ENCODE measurements at regions of chr6 and their contacts with region 1.

Region 1: DNA sequence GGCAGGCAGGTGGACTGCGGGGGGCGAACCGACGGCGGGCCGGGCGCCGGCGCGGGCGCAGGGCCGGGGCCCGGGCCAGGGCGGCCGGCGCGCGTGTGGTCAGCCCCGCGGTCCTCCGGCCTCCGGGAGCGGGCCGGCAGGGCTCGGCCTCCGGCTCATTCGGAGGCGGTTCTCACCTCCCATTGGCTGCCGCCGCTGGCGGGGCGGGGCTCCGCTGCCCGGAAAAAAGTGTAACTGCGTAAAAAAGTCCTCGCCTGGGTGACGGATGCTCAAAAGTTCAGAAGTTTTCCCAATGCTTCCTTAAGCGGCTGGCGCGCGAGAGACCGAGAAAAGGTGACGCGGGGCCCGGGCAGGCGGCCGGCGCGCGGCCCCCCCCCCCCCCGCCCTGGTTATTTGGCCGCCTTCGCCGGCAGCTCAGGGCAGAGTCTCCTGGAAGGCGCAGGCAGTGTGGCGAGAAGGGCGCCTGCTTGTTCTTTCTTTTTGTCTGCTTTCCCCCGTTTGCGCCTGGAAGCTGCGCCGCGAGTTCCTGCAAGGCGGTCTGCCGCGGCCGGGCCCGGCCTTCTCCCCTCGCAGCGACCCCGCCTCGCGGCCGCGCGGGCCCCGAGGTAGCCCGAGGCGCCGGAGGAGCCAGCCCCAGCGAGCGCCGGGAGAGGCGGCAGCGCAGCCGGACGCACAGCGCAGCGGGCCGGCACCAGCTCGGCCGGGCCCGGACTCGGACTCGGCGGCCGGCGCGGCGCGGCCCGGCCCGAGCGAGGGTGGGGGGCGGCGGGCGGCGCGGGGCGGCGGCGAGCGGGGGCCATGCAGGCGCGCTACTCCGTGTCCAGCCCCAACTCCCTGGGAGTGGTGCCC is at the start of gene FOXC1:
- DNase-seq: peak; percentile 81 to 83
- ATAC-seq: peak; percentile 77
- total RNA-seq, gene FOXC1: 0.82 to 1.5 TPM

Region 2: GRCh38 chr6:1063671-1064355 is 546.1 kb before region 1 on chr6:
- intact Hi-C with region 1: no loop called
- DNase-seq: no peak
- ATAC-seq: peak; percentile 68

Region 3: DNA sequence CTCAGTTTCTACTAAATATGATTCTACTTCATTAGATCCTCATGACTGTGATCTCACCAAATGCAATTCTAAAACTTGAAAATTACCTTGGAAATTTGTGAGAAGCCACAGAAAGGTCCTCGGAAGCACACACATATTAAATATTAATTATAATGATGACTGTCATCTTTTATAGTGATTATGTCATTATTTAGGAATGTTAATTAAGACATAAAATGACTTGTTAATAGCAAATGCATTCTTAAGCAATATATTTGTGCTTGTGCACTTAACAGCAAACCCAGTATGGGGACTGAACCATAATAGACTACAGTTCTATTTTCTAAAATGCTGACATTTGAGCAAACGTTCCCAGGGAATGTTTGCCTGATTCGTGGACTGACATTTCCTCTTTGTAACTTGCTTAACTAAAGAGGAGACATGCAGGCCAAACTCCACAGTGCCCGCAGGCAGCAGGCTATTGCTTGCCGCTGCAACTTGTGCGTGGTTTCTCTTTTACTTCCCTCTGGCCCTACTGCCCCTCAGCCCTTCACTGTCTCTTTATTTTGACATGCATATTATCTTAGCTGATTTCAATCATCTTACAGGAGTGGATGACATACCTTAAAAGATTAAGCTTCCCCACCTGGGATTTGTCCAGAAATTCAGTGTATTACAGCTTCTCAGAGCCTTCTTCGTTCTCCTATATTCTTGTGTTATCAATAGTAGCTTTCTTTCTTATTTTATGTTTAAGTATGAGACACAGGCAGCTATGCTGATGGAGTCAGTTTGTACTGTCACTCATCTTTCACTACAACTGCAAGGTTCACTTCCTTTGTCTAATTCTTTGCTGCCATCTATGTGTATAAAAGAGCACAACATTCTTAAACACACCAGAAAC is 494.0 kb after region 1 on chr6:
- intact Hi-C with region 1: loop called in 1 of 2 experiments (anchors 10 kb)
- DNase-seq: no peak
- ATAC-seq: peak; percentile 89

Region 4: DNA sequence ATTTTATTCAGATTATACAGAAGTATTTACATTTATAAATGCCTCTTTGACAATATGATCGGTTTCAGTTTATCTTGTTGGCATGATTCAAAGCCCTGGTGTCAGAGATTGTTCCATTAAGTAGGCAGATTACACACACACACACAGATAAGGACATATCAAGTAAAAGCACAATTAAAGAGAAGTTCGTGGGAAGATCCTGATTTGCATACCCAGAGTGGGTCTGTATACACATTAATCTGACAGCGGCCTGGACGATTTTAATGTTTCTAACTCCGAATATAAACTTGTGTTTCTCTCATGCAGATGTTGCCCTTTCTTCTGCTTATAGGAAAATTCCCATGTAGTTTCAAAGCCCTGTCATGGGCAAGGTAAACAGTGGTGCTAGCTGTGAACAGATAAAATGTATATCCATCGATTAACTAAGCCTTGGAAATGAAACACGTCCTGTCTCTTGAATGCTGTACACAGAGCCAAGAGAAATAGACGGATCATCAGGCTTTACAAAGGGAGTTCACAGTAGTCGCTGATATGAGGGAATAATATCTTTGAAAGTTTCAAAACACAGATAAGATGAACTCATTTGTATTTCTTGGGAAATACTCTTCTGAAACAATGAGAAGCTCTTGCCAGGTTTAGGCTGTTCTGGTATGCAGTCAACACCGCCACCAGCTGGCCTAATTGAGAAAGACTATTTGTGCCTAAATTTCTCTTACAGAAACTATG is 743.7 kb after region 1 on chr6:
- intact Hi-C with region 1: loop called in 1 of 2 experiments (anchors 10 kb)
- DNase-seq: peak; percentile 44 to 74
- ATAC-seq: peak; percentile 83

Region 5: GRCh38 chr6:2634139-2634964 is 1024.5 kb after region 1 on chr6:
- intact Hi-C with region 1: loop called (anchors 5 to 10 kb)
- DNase-seq: peak; percentile 68 to 88
- ATAC-seq: peak; percentile 98

Region 6: DNA sequence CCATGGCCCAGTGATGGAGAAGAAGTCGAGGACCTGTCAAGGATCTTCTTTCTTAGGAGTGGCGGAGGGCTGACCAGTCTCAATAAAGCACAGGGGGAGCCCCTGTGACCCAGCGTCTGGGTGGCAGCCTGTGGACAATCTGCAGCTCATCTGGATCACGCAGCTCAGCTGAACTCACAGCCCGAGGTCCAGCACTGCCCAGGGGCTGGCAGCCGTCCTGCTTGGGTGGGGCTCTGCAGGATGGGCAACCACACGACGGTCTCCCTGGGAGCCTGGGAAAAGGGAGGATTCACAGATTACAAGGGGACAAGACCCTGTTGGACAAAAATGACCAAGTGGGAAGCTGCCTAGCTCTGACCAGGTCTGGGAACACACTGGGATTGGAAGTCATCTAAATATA is 1030.0 kb after region 1 on chr6:
- intact Hi-C with region 1: loop called (anchors 5 to 10 kb)
- DNase-seq: no peak
- ATAC-seq: no peak

Measured in left colon (tissue), 2 donors.